ENCODE measurements at regions of chr11 and their contacts with region 1.

Region 1: DNA sequence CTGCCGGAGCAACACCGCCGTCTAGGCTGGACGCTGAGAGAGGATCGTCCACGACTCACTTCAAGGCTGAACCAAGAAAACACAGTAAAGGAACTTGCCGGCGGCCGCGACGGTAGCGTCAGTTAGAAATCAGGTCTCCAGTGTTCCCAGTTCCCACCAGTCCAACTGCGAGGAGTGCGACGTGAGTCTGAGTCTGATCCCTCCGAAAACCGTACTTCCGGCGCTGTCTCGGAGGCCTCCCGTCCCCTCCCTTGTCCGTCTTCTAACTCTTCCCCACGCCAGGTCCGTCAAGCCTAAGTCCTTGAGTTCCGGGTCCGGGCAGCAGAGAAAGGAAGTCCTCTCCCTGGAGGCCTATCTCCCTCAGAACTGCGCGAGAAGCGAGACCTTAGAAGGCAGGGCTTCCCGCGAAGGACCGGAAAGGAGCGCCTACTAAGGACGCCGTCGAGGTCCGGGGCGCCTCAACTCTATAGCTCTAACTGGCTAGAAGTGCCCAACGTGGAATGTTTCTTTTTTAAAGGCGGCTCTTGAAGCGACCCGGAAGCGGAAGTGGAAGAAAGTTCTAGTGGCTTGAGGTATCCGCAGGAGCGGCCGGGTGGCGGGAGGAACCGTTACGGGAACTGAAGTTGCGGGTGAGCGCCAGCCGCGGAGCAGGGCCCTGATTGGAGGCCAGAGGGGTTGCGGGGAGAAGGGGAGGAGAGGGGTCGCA is at the starts of genes BANF1 and EIF1AD:
- DNase-seq: peak; percentile 94 to 97
- H3K4me3 ChIP-seq: peak within 1 kb of the TSS; percentile 90
- H3K27ac ChIP-seq: peak within 1 kb of the TSS; percentile 78
- H3K4me1 ChIP-seq: peaks cover 14% of the 10 kb centered on the region
- H3K27me3 ChIP-seq: no peaks in the 10 kb centered on the region
- CTCF ChIP-seq: no peak
- total RNA-seq, gene BANF1: 386 and 513 TPM in 2 replicates
- total RNA-seq, gene EIF1AD: 42.9 and 55.2 TPM in 2 replicates

Region 2: DNA sequence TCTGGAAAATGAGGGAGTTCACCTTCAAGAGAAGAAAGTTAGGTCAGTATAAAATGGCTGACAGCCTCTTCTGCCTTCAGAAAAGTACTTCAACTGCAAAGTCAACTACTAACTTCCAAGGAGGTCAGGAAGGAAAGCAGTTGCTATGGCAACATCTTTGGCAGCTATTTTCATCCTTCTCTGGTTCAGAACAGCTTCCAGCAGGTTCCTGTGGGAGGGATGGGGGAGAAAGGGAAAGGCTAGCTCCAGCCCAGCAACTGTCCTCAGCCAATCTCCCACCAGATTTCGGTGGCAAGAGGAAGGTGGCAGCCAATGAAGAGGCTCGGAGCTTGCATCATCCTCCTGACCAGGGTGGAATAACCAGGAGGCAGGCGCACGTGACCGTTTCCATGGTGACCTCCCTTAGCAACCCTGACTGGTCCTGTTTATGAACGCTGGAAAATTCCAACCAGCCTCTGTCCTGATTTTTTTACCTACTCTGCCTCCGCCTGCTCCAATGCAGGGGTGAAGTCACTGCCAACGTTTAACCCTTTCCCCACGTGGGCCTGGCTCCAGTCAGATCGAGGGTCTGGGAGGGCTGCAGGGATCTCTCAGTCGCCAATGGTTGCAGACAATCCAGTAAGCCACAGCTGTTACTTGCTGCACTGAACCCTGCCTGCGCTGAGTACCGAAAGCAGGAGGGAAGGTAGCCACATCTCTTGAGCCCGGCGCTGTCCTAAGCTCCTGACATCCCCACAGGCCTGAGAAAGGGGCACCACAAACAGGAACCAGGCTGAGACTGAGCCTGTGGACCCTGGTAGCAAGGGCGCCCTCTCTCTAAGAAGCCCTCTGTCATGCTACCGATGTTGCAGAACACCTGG is 514.5 kb before region 1 on chr11:
- CTCF ChIA-PET with region 1: no interaction called
- POLR2A ChIA-PET with region 1: no interaction called
- intact Hi-C with region 1: no loop called
- DNase-seq: peak; percentile 98 to 99
- H3K4me3 ChIP-seq: no peak overlapping the region
- H3K27ac ChIP-seq: peak overlapping the region; percentile 88
- H3K4me1 ChIP-seq: peaks cover 79% of the 10 kb centered on the region
- H3K27me3 ChIP-seq: no peaks in the 10 kb centered on the region
- CTCF ChIP-seq: no peak

Region 3: DNA sequence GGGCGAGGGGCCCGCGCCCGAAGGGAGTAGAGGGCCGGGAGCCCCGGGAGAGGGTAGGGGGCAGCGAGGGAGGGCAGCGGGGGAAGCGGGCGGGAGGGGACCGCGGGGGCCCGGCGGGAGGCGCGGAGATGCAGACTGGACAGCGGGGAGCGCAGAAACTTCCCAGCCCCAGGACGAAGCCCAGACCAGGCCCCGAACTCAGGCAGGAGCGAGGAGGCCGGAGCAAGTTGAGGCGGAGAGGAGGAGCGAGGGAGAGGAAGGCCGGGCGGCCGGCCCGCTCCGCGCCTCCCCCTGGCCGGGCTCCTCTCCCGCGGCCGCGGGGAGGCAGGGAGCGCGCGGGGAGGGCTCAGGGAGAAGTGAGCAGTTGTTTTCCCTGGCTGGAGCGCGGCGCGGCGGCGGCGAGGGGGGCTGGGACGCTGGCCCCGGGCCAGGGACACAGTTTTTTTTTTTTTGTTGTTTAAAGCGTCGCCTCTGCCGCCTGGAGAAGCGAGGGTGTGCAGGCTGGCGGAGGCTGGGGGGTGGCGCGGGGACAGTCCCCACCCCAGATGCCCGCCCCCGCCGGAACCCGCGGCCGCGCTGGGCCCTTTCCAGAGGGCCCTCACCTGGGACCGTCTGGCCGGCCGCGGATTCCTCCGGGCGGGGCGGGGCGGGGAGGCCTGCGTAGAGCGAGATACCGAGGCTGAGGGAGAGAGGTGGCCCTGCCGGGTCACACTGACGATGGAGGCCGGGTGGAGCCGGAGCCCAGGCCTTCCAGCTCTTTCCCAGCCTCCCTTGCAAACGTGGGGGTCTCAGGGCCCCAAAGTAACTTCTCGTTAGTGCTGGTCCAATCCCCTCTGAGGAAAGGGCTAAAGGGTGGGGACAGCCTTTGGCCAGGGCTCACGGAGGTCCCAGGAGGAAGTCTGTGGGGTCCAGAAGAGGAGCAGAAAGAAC is 443.8 kb before region 1 on chr11 and contains the start of gene LTBP3:
- CTCF ChIA-PET with region 1: interaction called, 11 read pairs
- POLR2A ChIA-PET with region 1: no interaction called
- intact Hi-C with region 1: no loop called
- DNase-seq: peak; percentile 71 to 92
- H3K4me3 ChIP-seq: peak within 1 kb of the TSS; percentile 77
- H3K27ac ChIP-seq: peak within 1 kb of the TSS; percentile 69
- H3K4me1 ChIP-seq: peaks cover 71% of the 10 kb centered on the region
- H3K27me3 ChIP-seq: no peaks in the 10 kb centered on the region
- CTCF ChIP-seq: no peak
- total RNA-seq, gene LTBP3: 455 and 553 TPM in 2 replicates

Region 4: GRCh38 chr11:65900125-65900898 is 101.8 kb before region 1 on chr11 and contains the start of gene FOSL1:
- CTCF ChIA-PET with region 1: no interaction called
- POLR2A ChIA-PET with region 1: interaction called, 11 read pairs
- intact Hi-C with region 1: no loop called
- DNase-seq: peak; percentile 97 to 100
- H3K4me3 ChIP-seq: peak within 1 kb of the TSS; percentile 96
- H3K27ac ChIP-seq: peak within 1 kb of the TSS; percentile 95
- H3K4me1 ChIP-seq: peaks cover 71% of the 10 kb centered on the region
- H3K27me3 ChIP-seq: no peaks in the 10 kb centered on the region
- CTCF ChIP-seq: no peak
- total RNA-seq, gene FOSL1: 58.8 and 69.9 TPM in 2 replicates

Region 5: GRCh38 chr11:66035653-66036333 is 33.7 kb after region 1 on chr11:
- CTCF ChIA-PET with region 1: interaction called, 11 read pairs
- POLR2A ChIA-PET with region 1: no interaction called
- intact Hi-C with region 1: no loop called
- DNase-seq: no peak
- H3K4me3 ChIP-seq: no peak overlapping the region
- H3K27ac ChIP-seq: no peak overlapping the region
- H3K4me1 ChIP-seq: no peaks in the 10 kb centered on the region
- H3K27me3 ChIP-seq: no peaks in the 10 kb centered on the region
- CTCF ChIP-seq: no peak

Region 6: DNA sequence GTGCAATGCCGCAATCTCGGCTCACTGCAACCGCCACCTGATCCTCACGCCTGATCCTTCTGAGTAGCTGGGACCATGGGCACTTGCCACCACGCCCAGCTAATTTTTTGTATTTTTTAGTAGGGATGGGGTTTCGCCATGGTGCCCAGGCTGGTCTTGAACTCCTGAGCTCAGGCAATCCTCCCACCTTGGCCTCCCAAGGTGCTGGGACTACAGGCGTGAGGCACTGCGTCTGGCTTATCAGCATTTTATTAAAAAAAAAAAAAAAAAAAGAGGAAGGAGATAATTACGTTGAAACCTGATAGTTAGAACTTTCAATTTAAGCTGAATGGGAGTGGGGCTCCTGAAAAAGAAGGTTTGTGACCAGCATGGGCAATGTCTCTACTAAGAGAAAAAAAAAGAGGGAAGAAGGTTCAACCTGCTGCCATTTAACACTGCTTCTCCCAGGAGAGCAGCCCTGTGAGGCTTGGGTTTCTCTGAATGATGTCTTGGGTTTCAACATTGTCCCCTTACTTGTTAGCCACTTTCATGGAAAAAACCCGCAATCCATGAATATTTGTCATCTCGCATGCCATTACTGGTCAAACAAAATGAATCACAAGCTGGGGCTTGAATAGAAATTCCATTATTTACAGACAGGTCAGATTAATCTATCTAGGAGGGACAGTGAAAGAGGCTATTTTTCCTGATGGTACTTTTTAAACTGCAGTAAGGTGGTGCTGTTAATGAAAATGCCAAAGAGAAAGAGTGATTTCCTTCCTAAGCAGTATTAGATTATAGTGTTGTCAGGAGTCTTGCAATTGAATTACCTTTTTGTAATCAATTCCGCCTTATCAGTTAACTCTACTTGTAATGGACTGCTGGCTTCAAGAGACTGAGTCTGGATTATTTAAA is 140.5 kb after region 1 on chr11:
- CTCF ChIA-PET with region 1: no interaction called
- POLR2A ChIA-PET with region 1: no interaction called
- intact Hi-C with region 1: no loop called
- DNase-seq: peak; percentile 68 to 97
- H3K4me3 ChIP-seq: no peak overlapping the region
- H3K27ac ChIP-seq: peak overlapping the region; percentile 75
- H3K4me1 ChIP-seq: peaks cover 27% of the 10 kb centered on the region
- H3K27me3 ChIP-seq: no peaks in the 10 kb centered on the region
- CTCF ChIP-seq: no peak

Region 7: DNA sequence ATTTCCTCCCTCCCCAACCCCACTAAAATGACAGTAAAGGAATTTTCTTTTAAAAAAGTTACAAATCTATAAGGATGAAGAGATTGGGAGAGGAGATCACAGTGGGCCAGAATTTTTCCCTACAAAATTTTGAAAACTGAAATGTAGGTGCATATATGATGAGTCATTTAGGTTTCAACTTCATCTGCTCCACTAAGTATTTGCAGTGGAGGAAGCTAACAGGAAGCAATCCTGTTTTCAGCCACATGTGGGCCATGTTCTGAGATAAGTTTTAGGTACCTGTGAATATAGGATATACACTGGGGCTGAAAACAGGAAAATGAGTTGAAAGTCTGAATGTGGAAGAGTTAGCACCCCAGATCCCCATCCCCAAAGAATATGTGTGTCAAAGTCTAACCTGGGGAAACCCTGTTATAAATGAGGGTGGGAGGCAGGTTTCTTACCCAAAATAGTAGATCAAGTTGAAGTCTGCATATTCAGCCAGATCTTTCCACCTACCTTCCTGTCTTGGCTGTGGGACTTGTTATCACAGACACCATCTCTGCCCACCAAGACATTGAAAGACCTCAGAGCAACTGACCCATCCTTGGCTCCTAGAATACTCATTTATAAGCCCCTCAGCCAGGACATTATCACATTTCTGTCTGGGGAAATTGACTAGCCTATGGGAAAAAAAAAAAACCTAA is 155.2 kb after region 1 on chr11:
- CTCF ChIA-PET with region 1: no interaction called
- POLR2A ChIA-PET with region 1: no interaction called
- intact Hi-C with region 1: no loop called
- DNase-seq: no peak
- H3K4me3 ChIP-seq: no peak overlapping the region
- H3K27ac ChIP-seq: peak overlapping the region; percentile 27
- H3K4me1 ChIP-seq: peaks cover 9% of the 10 kb centered on the region
- H3K27me3 ChIP-seq: no peaks in the 10 kb centered on the region
- CTCF ChIP-seq: no peak; the same call in 1 of the 2 replicates

Region 8: GRCh38 chr11:66288671-66289547 is 286.8 kb after region 1 on chr11 and contains the start of gene YIF1A:
- CTCF ChIA-PET with region 1: no interaction called
- POLR2A ChIA-PET with region 1: interaction called, 35 read pairs
- intact Hi-C with region 1: no loop called
- DNase-seq: peak; percentile 99 to 100
- H3K4me3 ChIP-seq: peak within 1 kb of the TSS; percentile 96
- H3K27ac ChIP-seq: peak within 1 kb of the TSS; percentile 71
- H3K4me1 ChIP-seq: peaks cover 19% of the 10 kb centered on the region
- H3K27me3 ChIP-seq: no peaks in the 10 kb centered on the region
- CTCF ChIP-seq: no peak
- total RNA-seq, gene YIF1A: 81.8 and 84.8 TPM in 2 replicates

Region 9: DNA sequence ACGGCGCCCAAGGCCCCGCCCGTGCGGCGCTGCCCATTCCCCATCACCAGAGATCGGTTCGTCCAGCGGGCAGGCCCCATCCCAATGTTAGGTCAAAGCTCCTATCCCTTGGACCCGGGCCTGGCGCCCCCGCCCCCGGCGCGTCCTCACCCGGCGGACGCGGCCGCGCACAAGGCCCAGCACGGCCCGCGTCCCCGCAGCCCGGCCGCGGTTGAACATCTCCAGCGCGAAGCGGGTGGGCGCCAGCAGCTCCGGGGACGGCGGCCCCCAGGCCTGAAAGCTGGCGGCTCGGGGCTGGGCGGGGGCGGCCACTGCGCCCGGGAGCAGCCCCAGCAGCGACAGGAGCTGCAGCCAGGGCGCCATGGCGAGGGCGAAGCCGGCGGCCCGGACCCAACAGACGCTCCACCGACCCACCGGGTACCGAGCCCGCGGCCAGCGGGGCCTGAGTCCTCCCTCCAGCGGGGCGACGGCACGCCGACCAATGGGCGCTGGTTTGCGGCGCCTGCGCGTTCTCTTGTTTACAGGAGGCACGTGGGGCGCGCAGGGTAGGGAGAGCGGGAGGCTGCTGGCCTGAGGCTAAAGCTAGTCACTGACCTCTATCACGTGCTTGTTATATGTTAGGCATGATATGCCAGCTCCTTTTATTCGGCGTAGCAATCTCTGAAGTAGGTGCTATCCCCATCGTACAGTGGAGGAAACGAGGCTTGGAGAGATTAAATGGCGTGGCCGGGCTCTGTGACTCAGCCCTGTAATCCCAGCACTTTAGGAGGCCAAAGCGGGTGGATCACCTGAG is 566.2 kb after region 1 on chr11 and contains the start of gene CTSF:
- CTCF ChIA-PET with region 1: no interaction called
- POLR2A ChIA-PET with region 1: no interaction called
- intact Hi-C with region 1: no loop called
- DNase-seq: peak; percentile 61 to 84
- H3K4me3 ChIP-seq: peak within 1 kb of the TSS; percentile 56; the same call in 1 of the 2 replicates
- H3K27ac ChIP-seq: no peak within 1 kb of the TSS
- H3K4me1 ChIP-seq: peaks cover 5% of the 10 kb centered on the region; the same call in 1 of the 2 replicates
- H3K27me3 ChIP-seq: peaks cover 21% of the 10 kb centered on the region
- CTCF ChIP-seq: no peak
- total RNA-seq, gene CTSF: 34.3 and 59.2 TPM in 2 replicates